Lower lobe of right lung (tissue), 2 donors: ENCODE measurements at regions of chr2 and their contacts with region 1.

Region 1: DNA sequence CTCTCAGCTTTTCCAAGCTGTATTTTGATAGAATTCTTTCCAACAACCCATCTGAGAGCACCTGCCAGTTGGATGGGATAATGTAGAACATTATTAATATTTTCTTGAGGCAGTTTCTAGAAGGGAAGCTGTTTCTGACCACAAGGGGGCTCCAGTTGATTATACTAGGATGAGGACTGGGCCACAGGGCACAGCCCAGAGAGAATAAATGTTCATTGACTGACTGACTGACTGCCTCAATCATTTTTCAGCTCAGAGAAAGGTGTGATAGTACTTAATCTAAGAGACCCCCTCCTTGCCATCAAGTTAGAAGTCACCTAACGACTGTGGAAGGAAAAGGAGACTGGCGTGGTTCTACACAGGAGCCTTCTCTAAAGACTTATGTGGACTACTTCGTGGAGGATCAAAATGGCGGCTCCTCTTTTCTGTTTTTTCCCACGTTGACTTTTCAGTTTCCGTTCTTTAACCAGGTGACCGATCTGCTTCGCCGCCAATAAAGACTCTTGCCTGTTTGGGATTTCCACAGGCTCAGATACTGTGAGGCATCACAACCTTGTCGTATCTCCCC is 31.9 kb upstream of the CREG2 start:
- DNase-seq: no peak
- ATAC-seq: peak; percentile 76 to 77
- H3K4me3 ChIP-seq: no peak overlapping the region
- H3K27ac ChIP-seq: no peak overlapping the region
- H3K4me1 ChIP-seq: no peaks in the 10 kb centered on the region
- H3K27me3 ChIP-seq: no peaks in the 10 kb centered on the region
- CTCF ChIP-seq: peak; percentile 75

Region 2: DNA sequence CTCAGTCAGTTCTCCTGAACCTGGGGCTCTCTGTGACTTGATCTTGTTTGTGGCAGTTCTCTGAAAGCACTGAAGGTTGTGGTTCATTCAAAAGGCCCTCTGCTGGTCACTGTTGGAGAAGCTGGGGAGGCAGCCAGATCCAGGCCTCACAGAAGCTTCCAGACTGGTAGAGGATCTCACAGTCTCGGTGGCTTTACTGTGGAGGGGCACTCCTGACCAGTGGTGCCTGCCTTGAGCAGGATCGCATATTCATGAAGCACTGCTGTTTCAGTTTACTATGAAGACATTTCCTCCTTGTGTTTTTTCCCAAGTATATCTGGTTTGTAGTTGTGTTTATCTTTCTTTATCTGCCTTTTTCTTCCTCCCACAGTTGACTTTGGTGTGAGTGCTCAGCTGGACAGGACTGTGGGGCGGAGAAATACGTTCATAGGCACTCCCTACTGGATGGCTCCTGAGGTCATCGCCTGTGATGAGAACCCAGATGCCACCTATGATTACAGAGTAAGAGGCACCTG is 412.2 kb after region 1 on chr2:
- intact Hi-C with region 1: loop called (anchors 10 kb)
- DNase-seq: peak; percentile 56
- ATAC-seq: peak; percentile 84 to 89
- H3K4me3 ChIP-seq: no peak overlapping the region
- H3K27ac ChIP-seq: peak overlapping the region; percentile 8
- H3K4me1 ChIP-seq: peaks cover 48% of the 10 kb centered on the region
- H3K27me3 ChIP-seq: no peaks in the 10 kb centered on the region
- CTCF ChIP-seq: peak; percentile 83

Region 3: DNA sequence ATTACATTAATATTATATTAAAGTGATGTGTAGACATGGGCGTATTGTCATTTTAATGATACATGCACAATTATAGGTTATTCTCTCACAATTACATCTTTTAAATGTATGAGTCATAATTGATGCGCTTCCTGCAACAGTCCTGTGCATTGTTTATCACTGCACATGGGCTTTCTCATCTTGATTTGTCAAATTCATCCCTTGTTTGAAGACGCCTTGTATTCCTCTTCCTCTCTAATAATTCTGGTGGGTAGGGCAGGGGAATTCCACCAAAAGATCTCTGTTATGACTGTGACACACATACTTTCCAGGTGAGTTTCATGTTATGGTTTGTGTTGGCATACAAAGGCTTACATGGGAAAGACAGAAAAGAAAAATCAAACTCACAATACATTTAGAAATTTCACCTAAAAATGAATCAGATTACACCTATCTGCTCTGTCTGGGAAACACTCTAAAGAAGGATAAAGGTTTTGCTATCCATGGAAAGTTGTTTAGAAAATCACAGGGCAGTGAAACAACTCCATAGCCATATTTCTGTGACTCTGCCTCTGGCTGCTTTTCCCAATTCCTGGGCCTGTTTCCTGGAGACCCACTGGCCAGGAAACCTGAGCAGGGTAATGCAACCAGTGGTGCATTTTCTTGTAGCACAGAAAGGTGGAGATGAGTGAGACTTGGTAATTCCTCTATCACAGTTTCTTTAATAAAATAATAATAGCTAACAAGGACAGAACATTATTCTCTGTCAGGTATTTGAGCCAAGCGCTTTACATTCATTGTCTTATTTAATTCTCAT is 1213.4 kb after region 1 on chr2:
- intact Hi-C with region 1: no loop called
- DNase-seq: no peak
- ATAC-seq: no peak
- H3K4me3 ChIP-seq: no peak overlapping the region
- H3K27ac ChIP-seq: no peak overlapping the region
- H3K4me1 ChIP-seq: no peaks in the 10 kb centered on the region
- H3K27me3 ChIP-seq: no peaks in the 10 kb centered on the region
- CTCF ChIP-seq: no peak